Activated CD4-positive, alpha-beta memory T cell treated with anti-CD3 and anti-CD28 coated beads, Interleukin-2, amount 10 ng/mL, durations not matched to agents 7 days and 5 days (primary cell): ENCODE measurements at regions of chr6 and their contacts with region 1.

Region 1: GRCh38 chr6:160766989-160767660 is 65.1 kb downstream of the PLG start:
- DNase-seq: peak; percentile 53
- H3K4me3 Mint-ChIP-seq: peak overlapping the region; percentile 52
- H3K27ac Mint-ChIP-seq: no peak overlapping the region
- H3K4me1 Mint-ChIP-seq: peaks cover 5% of the 10 kb centered on the region
- H3K27me3 Mint-ChIP-seq: peaks cover 24% of the 10 kb centered on the region

Region 2: GRCh38 chr6:160733050-160733646 is 34.0 kb before region 1 on chr6:
- CTCF ChIA-PET with region 1: interaction called, 10 read pairs
- POLR2A ChIA-PET with region 1: no interaction called
- DNase-seq: peak; percentile 36
- H3K4me3 Mint-ChIP-seq: no peak overlapping the region
- H3K27ac Mint-ChIP-seq: no peak overlapping the region
- H3K4me1 Mint-ChIP-seq: peaks cover 3% of the 10 kb centered on the region
- H3K27me3 Mint-ChIP-seq: peaks cover 3% of the 10 kb centered on the region